ENCODE measurements at regions of chr10 and their contacts with region 1.

Region 1: GRCh38 chr10:78972947-78973900 is 95.5 kb upstream of the ZMIZ1 start:
- DNase-seq: peak; percentile 91
- H3K4me3 ChIP-seq: peak overlapping the region in 2 of 3 experiments; percentile 11 to 15
- H3K27ac ChIP-seq: peak overlapping the region; percentile 98
- H3K4me1 ChIP-seq: peaks cover 32% of the 10 kb centered on the region
- H3K27me3 ChIP-seq: no peaks in the 10 kb centered on the region
- CTCF ChIP-seq: no peak
- POLR2A ChIP-seq: peak; percentile 55

Region 2: DNA sequence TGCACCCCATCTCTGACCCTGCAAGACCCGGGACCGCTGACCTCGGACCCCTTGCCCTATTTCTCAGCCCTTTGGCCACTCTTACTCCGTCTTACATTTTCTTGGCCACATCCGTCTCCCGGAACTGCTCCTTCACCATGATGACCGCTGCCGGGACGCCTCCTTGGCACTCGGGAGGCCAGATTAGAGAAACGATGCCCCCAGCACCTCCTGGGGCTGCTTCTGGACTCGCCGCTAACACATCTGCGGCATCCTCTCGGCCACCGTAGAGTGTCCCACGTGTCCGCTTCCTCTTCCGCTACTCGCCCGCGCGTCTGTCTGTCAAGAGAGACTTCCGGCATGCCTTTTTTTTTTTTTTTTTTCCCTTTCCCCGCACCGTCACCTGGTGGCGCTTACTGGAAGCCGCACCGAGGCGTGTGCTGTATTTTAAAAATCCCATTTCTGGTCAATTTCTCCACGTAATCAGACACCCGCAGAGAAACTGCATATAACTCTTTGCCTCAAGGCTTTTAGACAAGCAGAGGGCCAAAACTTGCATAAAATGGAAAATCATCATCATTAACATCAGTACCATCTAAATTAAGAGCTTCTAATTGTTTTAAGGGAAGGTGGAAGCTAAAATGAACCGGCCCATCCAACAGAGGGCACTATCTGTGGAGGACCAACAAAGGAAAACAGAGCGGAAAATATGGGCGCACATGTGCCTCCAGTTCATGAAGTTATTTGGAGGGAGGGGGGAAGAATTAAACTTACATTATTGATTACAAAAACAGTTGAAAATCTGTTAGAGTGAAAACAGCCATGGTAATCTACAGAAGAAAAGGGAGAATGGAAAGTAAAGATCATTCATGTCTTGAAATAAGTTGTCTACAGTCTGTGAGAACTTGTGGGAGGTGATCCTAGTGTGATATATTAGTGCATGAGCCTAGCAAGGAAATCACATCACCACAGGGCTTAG is 943.7 kb before region 1 on chr10 and contains the start of gene POLR3A:
- CTCF ChIA-PET with region 1: no interaction called
- POLR2A ChIA-PET with region 1: no interaction called
- dilution Hi-C with region 1: no loop called
- intact Hi-C with region 1: loop called (anchors 5 kb)
- DNase-seq: peak; percentile 95
- H3K4me3 ChIP-seq: peak within 1 kb of the TSS; percentile 53 to 92 (median 82)
- H3K27ac ChIP-seq: peak within 1 kb of the TSS; percentile 63
- H3K4me1 ChIP-seq: peaks cover 34% of the 10 kb centered on the region
- H3K27me3 ChIP-seq: no peaks in the 10 kb centered on the region
- CTCF ChIP-seq: peak; percentile 58 to 66
- POLR2A ChIP-seq: peak; percentile 68
- total RNA-seq, gene POLR3A: 22.1 and 25.3 TPM in 2 replicates

Region 3: DNA sequence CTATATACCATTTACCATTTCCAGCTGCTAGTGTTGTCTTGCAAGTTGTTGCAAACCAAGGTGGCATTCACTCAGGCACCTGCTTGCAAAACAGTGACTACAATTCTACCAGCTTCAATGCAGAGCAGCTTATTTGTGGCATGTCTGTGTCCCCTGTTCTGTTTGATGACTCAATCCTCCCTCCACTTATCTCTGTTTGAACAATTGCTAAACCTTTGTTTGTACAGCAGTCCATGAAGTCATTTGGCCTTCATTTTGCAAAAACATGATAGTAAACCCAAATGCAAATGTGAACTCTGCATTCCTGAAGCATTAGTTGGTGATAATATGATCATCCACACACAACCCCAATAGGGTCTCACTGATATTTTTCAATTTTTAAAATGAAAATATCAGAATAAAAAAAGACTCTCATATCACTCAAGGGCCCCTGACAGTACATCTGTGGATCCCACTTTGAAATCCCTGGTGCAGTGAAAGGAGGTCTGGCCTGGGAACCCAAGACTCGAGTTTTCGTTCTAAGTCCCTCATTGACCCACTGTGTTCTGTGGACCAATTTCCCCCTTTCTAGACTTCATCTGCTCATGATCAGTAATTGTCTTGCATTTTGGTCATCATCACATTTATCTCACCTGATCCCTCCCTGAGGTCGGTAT is 514.1 kb before region 1 on chr10:
- CTCF ChIA-PET with region 1: no interaction called
- POLR2A ChIA-PET with region 1: no interaction called
- dilution Hi-C with region 1: no loop called
- intact Hi-C with region 1: loop called (anchors 5 kb)
- DNase-seq: peak; percentile 98
- H3K4me3 ChIP-seq: no peak overlapping the region
- H3K27ac ChIP-seq: peak overlapping the region; percentile 99
- H3K4me1 ChIP-seq: peaks cover 43% of the 10 kb centered on the region
- H3K27me3 ChIP-seq: no peaks in the 10 kb centered on the region
- CTCF ChIP-seq: no peak
- POLR2A ChIP-seq: peak; percentile 87

Region 4: GRCh38 chr10:78756604-78757349 is 216.4 kb before region 1 on chr10:
- CTCF ChIA-PET with region 1: interaction called, 5 read pairs
- POLR2A ChIA-PET with region 1: no interaction called
- dilution Hi-C with region 1: no loop called
- intact Hi-C with region 1: loop called (anchors 1 kb)
- DNase-seq: peak; percentile 95
- H3K4me3 ChIP-seq: no peak overlapping the region
- H3K27ac ChIP-seq: peak overlapping the region; percentile 54
- H3K4me1 ChIP-seq: peaks cover 34% of the 10 kb centered on the region
- H3K27me3 ChIP-seq: peaks cover 0 to 6% of the 10 kb centered on the region in 2 experiments
- CTCF ChIP-seq: no peak
- POLR2A ChIP-seq: no peak

Region 5: GRCh38 chr10:78892293-78893176 is 80.7 kb before region 1 on chr10:
- CTCF ChIA-PET with region 1: no interaction called
- POLR2A ChIA-PET with region 1: no interaction called
- dilution Hi-C with region 1: no loop called
- intact Hi-C with region 1: no loop called
- DNase-seq: no peak
- H3K4me3 ChIP-seq: no peak overlapping the region
- H3K27ac ChIP-seq: no peak overlapping the region
- H3K4me1 ChIP-seq: no peaks in the 10 kb centered on the region
- H3K27me3 ChIP-seq: peaks cover 17 to 18% of the 10 kb centered on the region in 2 experiments
- CTCF ChIP-seq: no peak
- POLR2A ChIP-seq: no peak

Region 6: DNA sequence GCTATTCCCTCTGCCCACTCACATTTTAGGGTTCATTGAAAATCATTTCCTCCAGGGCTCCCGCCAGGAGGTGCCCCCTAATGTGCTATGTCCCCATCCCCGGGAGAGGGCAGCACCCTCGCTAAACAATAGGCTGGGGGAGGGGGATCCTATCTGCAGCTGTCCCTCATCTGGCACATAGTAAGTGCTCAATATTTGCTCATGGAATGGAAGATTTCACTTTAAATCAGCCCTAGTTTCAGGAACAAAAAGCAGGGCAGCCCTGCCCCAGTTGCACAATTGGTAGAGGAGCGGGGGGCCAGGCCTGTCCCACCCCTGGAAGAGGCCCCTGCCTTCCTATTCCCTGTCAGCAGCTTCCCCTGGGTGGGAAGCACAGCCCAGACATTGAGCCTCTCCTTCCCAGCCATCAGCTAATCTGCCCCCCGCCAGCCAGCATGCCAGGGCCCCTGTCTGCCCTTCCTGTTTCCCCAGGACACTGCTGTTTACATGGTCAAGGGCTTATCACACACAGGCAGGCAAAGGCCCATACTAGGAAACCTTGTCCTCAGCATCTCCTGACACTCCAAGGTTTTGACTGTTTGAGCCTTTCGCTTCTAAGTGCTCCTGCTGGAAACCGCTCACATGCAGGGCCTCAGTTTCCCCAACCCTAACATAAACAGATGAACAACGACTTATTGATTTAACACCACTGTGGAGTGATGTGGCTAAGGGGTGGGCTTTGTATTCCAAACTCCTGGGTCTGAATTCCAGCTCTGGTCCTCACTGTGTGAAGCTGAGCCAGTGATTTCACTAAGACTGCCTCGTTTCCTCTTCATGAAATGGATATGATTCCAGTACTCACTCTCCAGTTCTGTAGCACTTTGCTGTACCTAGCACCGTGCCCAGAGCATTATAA is 35.2 kb before region 1 on chr10:
- CTCF ChIA-PET with region 1: interaction called, 5 read pairs
- POLR2A ChIA-PET with region 1: no interaction called
- dilution Hi-C with region 1: no loop called
- intact Hi-C with region 1: loop called (anchors 1 kb)
- DNase-seq: peak; percentile 83
- H3K4me3 ChIP-seq: no peak overlapping the region
- H3K27ac ChIP-seq: peak overlapping the region; percentile 47
- H3K4me1 ChIP-seq: peaks cover 16% of the 10 kb centered on the region
- H3K27me3 ChIP-seq: no peaks in the 10 kb centered on the region
- CTCF ChIP-seq: peak; percentile 29 to 45
- POLR2A ChIP-seq: no peak

Region 7: DNA sequence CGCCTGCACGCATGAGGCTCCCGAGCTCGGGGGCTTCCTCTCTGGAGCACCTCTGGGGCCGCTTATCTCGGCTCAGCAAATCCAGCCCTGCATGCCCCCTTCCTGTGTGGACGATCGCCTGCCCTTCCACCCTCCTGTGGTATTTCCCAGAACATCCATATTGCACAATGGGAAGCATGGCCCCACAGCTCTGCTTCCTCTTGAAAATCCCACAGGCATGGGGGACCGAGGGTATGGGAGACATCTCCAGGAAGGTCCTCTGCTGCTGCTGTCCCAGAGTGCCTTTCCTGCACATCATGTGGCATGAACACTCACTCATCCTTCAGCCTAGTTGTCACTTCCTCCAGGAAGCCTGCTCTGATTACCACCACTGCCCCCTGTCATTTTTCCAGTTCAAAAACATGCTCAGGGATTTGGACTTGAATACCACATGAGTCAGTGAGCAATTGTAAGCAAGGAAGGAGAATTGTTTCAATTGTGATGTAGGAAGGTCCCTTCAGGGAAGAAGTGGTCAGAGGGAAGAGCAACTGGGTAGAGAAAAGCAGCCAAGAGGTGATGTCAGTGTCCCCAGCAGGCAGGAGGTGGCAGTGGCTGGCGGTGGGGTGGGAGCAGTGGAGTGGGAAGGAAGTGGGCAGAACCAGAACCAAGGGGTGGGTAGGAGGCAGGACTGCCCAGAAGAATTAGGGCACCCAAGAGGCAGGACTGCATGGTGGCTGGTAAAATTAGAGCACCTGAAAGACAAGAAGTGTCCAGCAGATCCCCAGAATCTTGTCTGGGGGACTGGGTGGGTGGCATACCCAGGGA is 28.1 kb after region 1 on chr10:
- CTCF ChIA-PET with region 1: interaction called, 5 read pairs
- POLR2A ChIA-PET with region 1: no interaction called
- dilution Hi-C with region 1: no loop called
- intact Hi-C with region 1: loop called (anchors 2 kb)
- DNase-seq: peak; percentile 83
- H3K4me3 ChIP-seq: no peak overlapping the region
- H3K27ac ChIP-seq: no peak overlapping the region
- H3K4me1 ChIP-seq: peaks cover 9% of the 10 kb centered on the region
- H3K27me3 ChIP-seq: no peaks in the 10 kb centered on the region
- CTCF ChIP-seq: peak in 1 of 2 donors; percentile 6
- POLR2A ChIP-seq: no peak

Region 8: DNA sequence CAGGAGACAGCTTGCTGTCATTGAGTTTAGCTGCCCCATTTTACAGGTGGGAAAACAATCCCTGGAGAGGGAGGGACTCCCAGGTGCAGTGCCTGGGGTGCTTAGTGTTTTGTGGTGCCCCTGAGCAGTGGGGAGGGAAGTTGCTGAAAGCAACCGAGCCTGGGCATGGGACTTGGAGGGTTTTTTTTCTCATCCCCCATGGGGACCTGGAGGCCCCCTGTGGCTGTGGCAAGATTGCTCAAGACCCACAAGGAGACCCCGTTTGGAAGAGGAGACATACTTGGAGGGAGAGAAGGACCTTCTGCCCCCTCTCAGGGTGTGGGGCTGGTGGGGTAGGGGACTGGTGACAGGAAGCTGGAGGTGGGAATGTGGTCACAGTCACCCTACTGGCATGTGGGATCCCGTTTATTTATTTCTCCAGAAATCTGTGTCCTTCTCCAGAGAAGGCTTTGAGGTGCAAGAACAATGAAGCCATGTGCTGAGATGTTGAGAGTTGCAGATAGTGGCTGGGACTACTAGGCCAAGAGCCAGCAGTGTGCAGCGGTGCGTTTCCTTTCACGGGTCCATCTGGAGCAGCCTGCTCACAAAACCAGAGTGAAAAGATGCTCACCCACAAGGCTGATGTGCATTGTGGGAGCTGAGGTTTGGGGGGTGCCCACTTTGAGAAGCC is 117.0 kb after region 1 on chr10:
- CTCF ChIA-PET with region 1: no interaction called
- POLR2A ChIA-PET with region 1: no interaction called
- dilution Hi-C with region 1: no loop called
- intact Hi-C with region 1: no loop called
- DNase-seq: peak; percentile 19
- H3K4me3 ChIP-seq: no peak overlapping the region
- H3K27ac ChIP-seq: no peak overlapping the region
- H3K4me1 ChIP-seq: peaks cover 10% of the 10 kb centered on the region
- H3K27me3 ChIP-seq: no peaks in the 10 kb centered on the region
- CTCF ChIP-seq: no peak
- POLR2A ChIP-seq: no peak

Region 9: GRCh38 chr10:79149662-79150443 is 176.6 kb after region 1 on chr10:
- CTCF ChIA-PET with region 1: no interaction called
- POLR2A ChIA-PET with region 1: no interaction called
- dilution Hi-C with region 1: no loop called
- intact Hi-C with region 1: loop called (anchors 1 kb)
- DNase-seq: no peak
- H3K4me3 ChIP-seq: no peak overlapping the region
- H3K27ac ChIP-seq: peak overlapping the region; percentile 88
- H3K4me1 ChIP-seq: peaks cover 84% of the 10 kb centered on the region
- H3K27me3 ChIP-seq: no peaks in the 10 kb centered on the region
- CTCF ChIP-seq: no peak
- POLR2A ChIP-seq: peak; percentile 43